ENCODE measurements at regions of chr12 and their contacts with region 1.

Region 1: GRCh38 chr12:15706052-15706676 is 83.0 kb downstream of the EPS8 start:
- DNase-seq: no peak
- ATAC-seq: no peak
- H3K4me3 ChIP-seq: no peak overlapping the region
- H3K27ac ChIP-seq: no peak overlapping the region
- H3K4me1 ChIP-seq: no peaks in the 10 kb centered on the region
- H3K27me3 ChIP-seq: no peaks in the 10 kb centered on the region
- CTCF ChIP-seq: no peak
- EP300 ChIP-seq: no peak
- POLR2A ChIP-seq: no peak
- RAD21 ChIP-seq: no peak

Region 2: GRCh38 chr12:15719230-15719629 is 13.1 kb after region 1 on chr12:
- CTCF ChIA-PET with region 1: interaction called, 5 read pairs
- POLR2A ChIA-PET with region 1: interaction called, 5 read pairs
- RAD21 ChIA-PET with region 1: interaction called, 5 read pairs
- SMC1A ChIA-PET with region 1: interaction called, 213 read pairs
- in situ Hi-C with region 1: no loop called
- intact Hi-C with region 1: no loop called
- DNase-seq: no peak
- ATAC-seq: peak; percentile 10; the same call in 1 of the 3 replicates
- H3K4me3 ChIP-seq: no peak overlapping the region
- H3K27ac ChIP-seq: no peak overlapping the region
- H3K4me1 ChIP-seq: no peaks in the 10 kb centered on the region
- H3K27me3 ChIP-seq: no peaks in the 10 kb centered on the region
- CTCF ChIP-seq: no peak
- EP300 ChIP-seq: no peak
- POLR2A ChIP-seq: no peak
- RAD21 ChIP-seq: no peak

Region 3: DNA sequence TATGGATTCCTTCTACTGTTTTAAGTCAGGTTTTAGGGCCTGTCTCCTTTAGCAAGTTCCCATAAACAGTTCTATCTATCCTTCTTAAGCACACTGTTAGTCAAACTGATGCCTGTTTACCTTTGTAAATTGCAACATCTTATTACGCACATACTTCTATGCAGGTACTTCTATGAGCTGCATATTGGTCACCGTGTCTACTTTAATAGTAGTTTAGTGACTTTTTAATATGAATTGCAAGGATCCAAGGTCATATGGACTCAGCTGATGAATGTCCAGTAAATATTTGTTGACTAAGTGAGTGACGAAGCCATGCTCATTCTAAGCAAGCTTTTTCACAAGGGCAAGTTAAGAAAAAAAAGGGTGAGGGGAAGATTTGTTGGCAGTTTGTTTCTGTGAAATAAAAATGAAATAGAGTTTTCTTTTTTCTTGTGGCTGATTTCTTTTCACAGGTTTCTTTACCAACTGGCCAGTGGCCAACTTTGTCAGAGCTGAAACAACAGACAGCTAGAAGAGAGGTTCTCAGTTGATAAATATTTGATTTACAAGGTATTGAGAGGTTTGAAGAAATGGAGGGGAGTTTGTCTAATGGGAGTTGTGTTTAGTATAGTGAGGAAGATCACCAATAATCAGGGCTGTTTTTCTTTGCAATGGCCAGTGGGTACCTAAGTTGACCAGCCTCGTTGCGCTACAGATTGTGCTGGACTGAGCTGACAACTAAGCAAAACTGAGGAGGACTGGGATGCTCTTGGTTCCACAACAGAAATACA is 430.2 kb after region 1 on chr12:
- CTCF ChIA-PET with region 1: no interaction called
- POLR2A ChIA-PET with region 1: no interaction called
- RAD21 ChIA-PET with region 1: no interaction called
- SMC1A ChIA-PET with region 1: no interaction called
- in situ Hi-C with region 1: no loop called
- intact Hi-C with region 1: no loop called
- DNase-seq: no peak
- ATAC-seq: no peak
- H3K4me3 ChIP-seq: no peak overlapping the region
- H3K27ac ChIP-seq: no peak overlapping the region
- H3K4me1 ChIP-seq: no peaks in the 10 kb centered on the region
- H3K27me3 ChIP-seq: no peaks in the 10 kb centered on the region
- CTCF ChIP-seq: no peak
- EP300 ChIP-seq: no peak
- POLR2A ChIP-seq: no peak
- RAD21 ChIP-seq: no peak

Measured in GM12878 (cell line).